ENCODE measurements at regions of chr3 and their contacts with region 1.

Region 1: DNA sequence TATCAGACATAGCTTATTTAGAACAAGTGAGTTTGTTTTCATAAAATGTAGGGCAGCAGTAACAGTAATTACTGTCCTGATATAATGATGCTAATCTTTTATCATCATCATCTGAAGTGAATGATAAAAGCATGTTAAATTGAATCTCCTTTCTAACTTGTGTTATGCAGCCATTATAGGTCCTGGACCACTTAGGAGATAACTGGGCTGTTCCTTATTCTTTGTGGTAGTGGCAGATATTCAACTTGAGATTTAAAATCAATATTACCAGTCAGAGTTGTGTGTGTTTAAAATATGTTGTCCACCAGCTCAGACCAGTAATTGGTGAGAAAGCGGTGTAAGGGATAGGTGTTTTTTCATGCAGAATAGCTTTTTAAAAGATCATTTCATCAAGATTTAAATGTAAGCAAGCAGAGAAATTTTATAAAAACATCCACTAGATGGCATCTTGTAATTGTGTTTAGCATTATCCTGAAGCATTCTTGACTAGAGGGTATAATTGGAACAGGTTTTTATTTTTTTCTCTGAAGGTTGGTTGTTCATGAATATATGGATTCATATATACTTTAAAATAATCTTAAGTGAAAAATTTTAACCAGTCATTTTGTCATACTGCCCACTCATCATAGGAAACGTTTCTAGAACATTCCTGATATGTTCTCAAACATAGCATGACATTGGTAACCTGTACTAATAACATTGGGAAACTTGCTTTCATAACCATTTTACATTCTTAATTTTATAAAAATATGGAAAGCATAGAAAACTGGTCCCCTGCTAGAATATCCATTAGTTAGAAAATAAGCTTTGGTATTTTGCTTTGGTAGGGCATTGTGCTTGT is 153.9 kb downstream of the BBX start:
- DNase-seq: peak in 1 of 2 donors; percentile 45
- ATAC-seq: peak in 2 of 3 donors; percentile 34 to 50
- H3K4me3 ChIP-seq: no peak overlapping the region
- H3K4me3 Mint-ChIP-seq: no peak overlapping the region
- H3K27ac ChIP-seq: no peak overlapping the region
- H3K27ac Mint-ChIP-seq: no peak overlapping the region
- H3K4me1 ChIP-seq: no peaks in the 10 kb centered on the region
- H3K4me1 Mint-ChIP-seq: peaks cover 31 to 38% of the 10 kb centered on the region in 2 donors
- H3K27me3 ChIP-seq: no peaks in the 10 kb centered on the region
- H3K27me3 Mint-ChIP-seq: no peaks in the 10 kb centered on the region
- CTCF ChIP-seq: peak; percentile 59

Region 2: DNA sequence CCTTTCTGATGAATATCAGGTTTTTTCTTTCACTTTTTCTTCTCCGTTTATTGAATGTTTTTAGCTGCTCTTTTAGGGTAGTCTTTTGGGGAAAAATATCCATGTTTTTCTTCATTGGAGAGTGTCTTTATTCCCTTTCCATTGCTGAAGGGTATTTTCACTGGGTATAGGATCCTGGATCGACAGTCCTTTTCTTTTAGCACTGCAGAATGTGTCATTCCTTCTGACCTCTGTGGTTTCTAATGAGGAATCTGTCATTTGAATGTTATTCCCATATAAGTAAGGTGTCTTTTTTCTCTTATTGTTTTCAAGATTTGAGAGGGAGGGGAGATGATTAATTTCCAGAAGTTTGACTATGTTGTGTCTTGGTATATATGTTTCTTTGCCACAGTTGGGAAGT is 57.1 kb before region 1 on chr3:
- intact Hi-C with region 1: no loop called
- DNase-seq: no peak
- ATAC-seq: no peak
- H3K4me3 ChIP-seq: no peak overlapping the region
- H3K4me3 Mint-ChIP-seq: no peak overlapping the region
- H3K27ac ChIP-seq: no peak overlapping the region
- H3K27ac Mint-ChIP-seq: no peak overlapping the region
- H3K4me1 ChIP-seq: no peaks in the 10 kb centered on the region
- H3K4me1 Mint-ChIP-seq: peaks cover 51 to 66% of the 10 kb centered on the region in 2 donors
- H3K27me3 ChIP-seq: no peaks in the 10 kb centered on the region
- H3K27me3 Mint-ChIP-seq: no peaks in the 10 kb centered on the region
- CTCF ChIP-seq: no peak

Region 3: DNA sequence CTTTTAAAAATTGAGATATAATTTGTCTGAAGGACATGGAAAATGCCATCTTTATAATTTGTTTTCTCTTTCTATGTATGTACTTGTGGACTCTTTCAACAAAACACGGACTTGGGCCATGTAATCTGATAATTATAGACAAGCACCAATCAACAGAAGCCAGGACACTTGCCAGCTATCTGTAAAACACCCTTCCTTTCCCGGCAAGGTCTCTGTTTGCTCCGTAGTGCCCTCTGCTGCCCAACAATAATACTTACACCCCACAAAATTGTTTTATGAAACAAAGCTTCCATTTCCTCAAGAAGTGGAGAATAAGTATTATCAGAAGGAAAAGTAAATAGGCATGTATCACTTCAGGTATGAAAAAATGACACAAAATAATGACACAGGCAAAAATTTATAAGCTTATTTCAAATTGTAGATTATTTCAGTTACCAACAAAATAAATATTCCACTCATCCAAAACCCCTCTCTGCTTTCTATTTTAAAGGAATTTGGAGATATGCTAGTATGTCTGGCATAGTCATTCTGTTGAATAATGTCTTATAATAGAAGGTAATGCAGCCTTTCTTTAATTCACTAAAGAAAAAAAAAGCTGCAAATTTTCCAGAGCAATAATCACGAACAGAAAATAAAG is 800.9 kb after region 1 on chr3:
- intact Hi-C with region 1: loop called (anchors 10 kb)
- DNase-seq: peak; percentile 20 to 79
- ATAC-seq: peak; percentile 79 to 85 (median 83)
- H3K4me3 ChIP-seq: no peak overlapping the region
- H3K4me3 Mint-ChIP-seq: no peak overlapping the region
- H3K27ac ChIP-seq: no peak overlapping the region
- H3K27ac Mint-ChIP-seq: no peak overlapping the region
- H3K4me1 ChIP-seq: no peaks in the 10 kb centered on the region
- H3K4me1 Mint-ChIP-seq: no peaks in the 10 kb centered on the region
- H3K27me3 ChIP-seq: no peaks in the 10 kb centered on the region
- H3K27me3 Mint-ChIP-seq: peaks cover 0 to 15% of the 10 kb centered on the region in 2 donors
- CTCF ChIP-seq: peak; percentile 83

Measured in natural killer cell (primary cell).